A673 (cell line): ENCODE measurements at regions of chr15 and their contacts with region 1.

Region 1: DNA sequence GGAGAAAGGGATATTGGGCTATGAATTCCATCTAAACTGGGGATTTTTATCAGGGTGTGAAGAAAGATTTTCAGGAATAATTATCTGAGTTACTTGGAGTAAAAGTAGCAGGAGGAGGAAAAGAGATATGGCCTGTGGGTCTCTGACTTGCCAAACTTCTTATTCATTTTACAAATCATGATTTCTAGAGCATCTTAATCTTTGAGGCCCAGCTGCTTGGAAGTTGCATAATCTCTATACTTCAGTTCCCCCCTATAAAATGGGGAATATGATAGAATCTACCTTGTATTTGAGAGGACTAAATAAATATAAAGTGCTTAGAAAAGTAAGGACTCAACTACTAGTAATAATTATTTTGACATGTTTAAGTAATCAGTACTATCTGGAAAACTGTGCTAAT is 11.0 kb upstream of the GABPB1 start:
- DNase-seq: no peak
- H3K4me3 ChIP-seq: no peak overlapping the region
- H3K27ac ChIP-seq: no peak overlapping the region
- H3K4me1 ChIP-seq: no peaks in the 10 kb centered on the region
- H3K27me3 ChIP-seq: no peaks in the 10 kb centered on the region
- CTCF ChIP-seq: no peak

Region 2: GRCh38 chr15:50003786-50004334 is 362.1 kb before region 1 on chr15:
- CTCF ChIA-PET with region 1: no interaction called
- POLR2A ChIA-PET with region 1: interaction called, 13 read pairs
- intact Hi-C with region 1: no loop called
- DNase-seq: peak; percentile 77
- H3K4me3 ChIP-seq: no peak overlapping the region
- H3K27ac ChIP-seq: no peak overlapping the region
- H3K4me1 ChIP-seq: no peaks in the 10 kb centered on the region
- H3K27me3 ChIP-seq: peaks cover 4% of the 10 kb centered on the region
- CTCF ChIP-seq: peak; percentile 82